ENCODE measurements at regions of chr7 and their contacts with region 1.

Region 1: DNA sequence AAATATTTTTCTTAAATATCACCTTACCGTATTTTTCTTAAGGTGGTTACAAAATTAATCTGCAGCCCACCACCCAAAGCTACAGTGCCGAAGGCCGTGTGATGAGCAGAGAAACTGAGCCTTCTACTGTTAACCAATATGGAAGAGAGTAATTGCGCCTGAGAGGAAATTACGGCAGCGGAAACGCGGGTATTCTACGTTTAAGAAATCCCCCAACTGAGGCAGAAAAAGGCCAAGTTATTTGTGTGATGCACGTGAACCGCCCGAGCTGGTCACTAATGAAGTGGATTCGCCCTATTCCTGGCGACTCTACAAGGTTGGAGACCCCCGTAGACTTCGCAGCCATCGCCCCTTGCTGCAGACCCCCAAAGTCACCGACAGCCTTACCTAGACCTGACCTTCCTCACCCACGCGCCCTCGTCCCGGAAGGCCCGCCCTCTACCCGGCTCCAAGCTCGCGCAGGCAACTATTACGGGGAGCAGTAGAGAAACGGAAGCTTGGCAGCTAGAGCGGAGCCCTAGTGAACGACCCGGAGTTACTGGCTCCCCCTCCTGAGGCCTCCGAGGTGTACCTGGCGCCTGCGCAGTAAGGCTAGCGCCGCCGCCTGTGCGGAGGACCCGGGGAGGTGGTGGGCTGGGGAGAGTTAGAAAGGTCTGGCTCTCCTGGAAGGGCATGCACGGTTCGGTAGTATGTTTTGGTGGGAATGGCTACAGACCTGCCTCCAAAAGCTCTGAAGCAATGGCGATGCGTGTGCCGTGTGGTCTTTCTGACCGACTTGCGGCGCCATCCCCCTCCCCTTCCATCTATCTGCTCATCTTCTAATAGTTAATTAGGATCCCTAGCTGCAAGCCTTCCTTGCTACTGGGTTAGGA is at the start of gene MRPS33:
- DNase-seq: peak; percentile 97
- H3K4me3 Mint-ChIP-seq: peak within 1 kb of the TSS; percentile 95
- H3K27ac Mint-ChIP-seq: peak within 1 kb of the TSS; percentile 98
- H3K4me1 Mint-ChIP-seq: peaks cover 28% of the 10 kb centered on the region
- H3K27me3 Mint-ChIP-seq: peaks cover 3% of the 10 kb centered on the region
- total RNA-seq, gene MRPS33: 116 to 120 TPM

Region 2: DNA sequence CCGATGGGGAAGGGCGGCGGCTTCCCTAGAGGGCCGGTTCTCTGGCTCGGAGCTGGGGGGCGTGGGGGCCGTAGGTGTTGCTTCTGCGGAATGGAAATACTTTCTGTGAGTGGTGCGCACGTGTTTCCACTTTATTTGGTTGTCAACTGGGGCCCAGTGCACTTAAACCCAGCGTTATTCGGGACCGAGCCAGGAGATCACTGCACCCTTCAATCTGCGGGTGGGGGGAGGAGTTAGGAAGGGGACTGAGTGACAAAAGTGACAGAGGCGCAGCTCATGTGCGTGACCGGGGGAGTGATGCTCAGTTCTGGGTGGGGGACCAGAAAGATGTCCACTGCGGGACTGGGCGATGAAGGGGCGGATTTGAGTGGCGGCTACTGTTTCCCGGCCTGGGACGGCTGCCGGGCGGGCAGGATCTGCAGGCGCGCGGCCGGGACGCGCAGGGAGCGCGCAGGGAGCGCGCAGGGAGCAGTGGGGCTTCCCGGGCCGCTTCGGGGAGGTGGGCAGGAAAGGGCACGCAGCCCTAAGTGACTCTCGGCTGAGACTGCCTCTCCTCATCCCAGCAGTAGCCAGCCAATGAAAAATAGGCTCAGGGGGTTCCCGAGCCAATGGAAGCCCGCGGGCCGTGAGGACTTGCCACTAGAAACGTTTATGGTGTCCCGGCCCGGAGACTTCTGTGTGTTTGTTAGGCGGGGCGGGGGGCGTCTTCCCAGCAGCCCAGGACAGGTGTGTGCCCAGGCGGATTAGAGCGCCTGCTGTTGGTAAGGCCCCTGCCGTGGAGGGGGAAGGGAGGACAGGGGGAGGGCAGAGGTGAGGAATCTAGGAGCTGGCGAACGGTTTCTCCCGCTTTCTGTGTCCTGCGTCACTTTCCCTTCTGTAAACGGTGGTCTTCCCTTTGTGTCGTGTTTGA is 783.6 kb before region 1 on chr7:
- CTCF ChIA-PET with region 1: no interaction called
- intact Hi-C with region 1: loop called (anchors 5 kb)
- DNase-seq: peak; percentile 85
- H3K4me3 Mint-ChIP-seq: peak overlapping the region; percentile 97
- H3K27ac Mint-ChIP-seq: peak overlapping the region; percentile 98
- H3K4me1 Mint-ChIP-seq: peaks cover 38% of the 10 kb centered on the region
- H3K27me3 Mint-ChIP-seq: no peaks in the 10 kb centered on the region

Region 3: GRCh38 chr7:140653319-140654108 is 361.2 kb before region 1 on chr7:
- CTCF ChIA-PET with region 1: interaction called, 4 read pairs
- intact Hi-C with region 1: loop called (anchors 1 kb)
- DNase-seq: peak; percentile 30
- H3K4me3 Mint-ChIP-seq: no peak overlapping the region
- H3K27ac Mint-ChIP-seq: no peak overlapping the region
- H3K4me1 Mint-ChIP-seq: peaks cover 15% of the 10 kb centered on the region
- H3K27me3 Mint-ChIP-seq: peaks cover 2% of the 10 kb centered on the region

Region 4: GRCh38 chr7:140810830-140811556 is 203.8 kb before region 1 on chr7:
- CTCF ChIA-PET with region 1: interaction called, 77 read pairs
- intact Hi-C with region 1: loop called (anchors 1 kb)
- DNase-seq: peak; percentile 78
- H3K4me3 Mint-ChIP-seq: no peak overlapping the region
- H3K27ac Mint-ChIP-seq: no peak overlapping the region
- H3K4me1 Mint-ChIP-seq: peaks cover 2% of the 10 kb centered on the region
- H3K27me3 Mint-ChIP-seq: no peaks in the 10 kb centered on the region

Region 5: GRCh38 chr7:141072548-141073172 is 57.9 kb after region 1 on chr7:
- CTCF ChIA-PET with region 1: interaction called, 4 read pairs
- intact Hi-C with region 1: loop called (anchors 2 kb)
- DNase-seq: peak; percentile 54
- H3K4me3 Mint-ChIP-seq: peak overlapping the region; percentile 64
- H3K27ac Mint-ChIP-seq: no peak overlapping the region
- H3K4me1 Mint-ChIP-seq: peaks cover 15% of the 10 kb centered on the region
- H3K27me3 Mint-ChIP-seq: peaks cover 53% of the 10 kb centered on the region

Region 6: GRCh38 chr7:141276031-141276430 is 261.3 kb after region 1 on chr7:
- CTCF ChIA-PET with region 1: no interaction called
- intact Hi-C with region 1: no loop called
- DNase-seq: no peak
- H3K4me3 Mint-ChIP-seq: no peak overlapping the region
- H3K27ac Mint-ChIP-seq: no peak overlapping the region
- H3K4me1 Mint-ChIP-seq: no peaks in the 10 kb centered on the region
- H3K27me3 Mint-ChIP-seq: no peaks in the 10 kb centered on the region

Region 7: DNA sequence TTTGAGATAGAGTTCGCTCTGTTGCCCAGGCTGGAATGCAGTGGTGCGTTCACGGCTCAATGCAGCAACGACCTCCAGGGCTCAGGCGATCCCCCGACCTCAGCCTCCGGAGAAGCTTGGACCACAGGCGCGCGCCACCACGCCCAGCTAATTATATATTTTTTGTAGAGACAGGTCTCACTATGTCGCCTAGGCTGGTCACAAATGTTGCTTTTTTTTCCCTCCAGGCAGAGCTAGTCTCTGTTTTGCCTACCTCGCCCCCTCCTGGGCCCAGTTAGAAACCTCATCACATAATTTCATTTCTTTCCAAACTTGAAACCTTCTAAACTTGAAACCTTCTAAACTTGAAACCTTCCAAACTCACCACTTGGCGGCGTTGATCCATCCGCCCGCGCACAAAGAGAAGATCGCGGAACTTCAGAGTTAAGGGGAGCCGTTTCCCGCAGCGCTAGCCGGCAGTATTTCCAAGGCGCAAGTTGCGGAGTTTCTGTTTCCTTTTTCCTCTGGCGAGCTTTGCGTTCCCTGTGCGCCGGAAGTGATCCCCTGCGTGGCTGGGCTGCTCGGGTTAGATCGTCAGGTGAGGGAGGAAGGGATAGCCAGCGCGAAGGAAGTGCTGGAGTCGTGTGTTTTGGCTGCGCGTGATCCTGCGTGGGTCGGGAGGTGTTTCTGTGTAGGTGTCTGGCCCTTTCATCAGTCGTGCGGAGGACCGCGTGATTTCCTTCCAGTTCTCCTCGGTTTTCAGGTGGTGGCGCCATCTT is 723.3 kb after region 1 on chr7 and contains the start of gene SSBP1:
- CTCF ChIA-PET with region 1: no interaction called
- intact Hi-C with region 1: loop called (anchors 1 kb)
- DNase-seq: peak; percentile 95
- H3K4me3 Mint-ChIP-seq: peak within 1 kb of the TSS; percentile 90
- H3K27ac Mint-ChIP-seq: peak within 1 kb of the TSS; percentile 96
- H3K4me1 Mint-ChIP-seq: peaks cover 36% of the 10 kb centered on the region
- H3K27me3 Mint-ChIP-seq: no peaks in the 10 kb centered on the region
- total RNA-seq, gene SSBP1: 202 to 230 TPM

Measured in activated naive CD4-positive, alpha-beta T cell treated with anti-CD3 and anti-CD28 coated beads for 36 hours (primary cell).